B cell (primary cell): ENCODE measurements at regions of chr6 and their contacts with region 1.

Region 1: GRCh38 chr6:108113557-108114519 is 39.3 kb upstream of the OSTM1 start:
- DNase-seq: peak; percentile 72
- ATAC-seq: no peak
- H3K4me3 ChIP-seq: peak overlapping the region in 2 of 5 experiments; percentile 15 to 31
- H3K4me3 Mint-ChIP-seq: peak overlapping the region; percentile 85
- H3K27ac ChIP-seq: no peak overlapping the region
- H3K27ac Mint-ChIP-seq: no peak overlapping the region
- H3K4me1 ChIP-seq: peaks cover 45 to 51% of the 10 kb centered on the region in 2 donors
- H3K4me1 Mint-ChIP-seq: peaks cover 44% of the 10 kb centered on the region
- H3K27me3 ChIP-seq: peaks cover 0 to 72% (median 63%) of the 10 kb centered on the region in 4 experiments
- H3K27me3 Mint-ChIP-seq: peaks cover 71% of the 10 kb centered on the region
- CTCF ChIP-seq: peak; percentile 74

Region 2: GRCh38 chr6:108133594-108134179 is 19.8 kb after region 1 on chr6:
- CTCF ChIA-PET with region 1: interaction called, 4 read pairs
- POLR2A ChIA-PET with region 1: interaction called, 3 read pairs
- intact Hi-C with region 1: loop called (anchors 2 kb)
- DNase-seq: peak; percentile 60
- ATAC-seq: peak; percentile 74
- H3K4me3 ChIP-seq: peak overlapping the region; percentile 7 to 64 (median 44)
- H3K4me3 Mint-ChIP-seq: peak overlapping the region; percentile 88
- H3K27ac ChIP-seq: no peak overlapping the region
- H3K27ac Mint-ChIP-seq: no peak overlapping the region
- H3K4me1 ChIP-seq: peaks cover 21 to 22% of the 10 kb centered on the region in 2 donors
- H3K4me1 Mint-ChIP-seq: peaks cover 16% of the 10 kb centered on the region
- H3K27me3 ChIP-seq: peaks cover 0 to 61% (median 46%) of the 10 kb centered on the region in 4 experiments
- H3K27me3 Mint-ChIP-seq: peaks cover 73% of the 10 kb centered on the region
- CTCF ChIP-seq: no peak

Region 3: GRCh38 chr6:108168501-108169463 is 54.9 kb after region 1 on chr6:
- CTCF ChIA-PET with region 1: interaction called, 9 read pairs
- POLR2A ChIA-PET with region 1: no interaction called
- intact Hi-C with region 1: loop called (anchors 2 kb)
- DNase-seq: peak; percentile 75
- ATAC-seq: peak; percentile 65
- H3K4me3 ChIP-seq: peak overlapping the region in 4 of 5 experiments; percentile 22 to 59 (median 40)
- H3K4me3 Mint-ChIP-seq: peak overlapping the region; percentile 79
- H3K27ac ChIP-seq: no peak overlapping the region
- H3K27ac Mint-ChIP-seq: no peak overlapping the region
- H3K4me1 ChIP-seq: peaks cover 70 to 80% of the 10 kb centered on the region in 2 donors
- H3K4me1 Mint-ChIP-seq: peaks cover 54% of the 10 kb centered on the region
- H3K27me3 ChIP-seq: peaks cover 3 to 95% (median 84%) of the 10 kb centered on the region in 4 experiments
- H3K27me3 Mint-ChIP-seq: peaks cover 70% of the 10 kb centered on the region
- CTCF ChIP-seq: peak; percentile 23

Region 4: GRCh38 chr6:108492131-108492766 is 378.4 kb after region 1 on chr6:
- CTCF ChIA-PET with region 1: interaction called, 135 read pairs
- POLR2A ChIA-PET with region 1: interaction called, 3 read pairs
- intact Hi-C with region 1: no loop called
- DNase-seq: peak; percentile 65
- ATAC-seq: peak; percentile 54
- H3K4me3 ChIP-seq: no peak overlapping the region
- H3K4me3 Mint-ChIP-seq: no peak overlapping the region
- H3K27ac ChIP-seq: no peak overlapping the region
- H3K27ac Mint-ChIP-seq: no peak overlapping the region
- H3K4me1 ChIP-seq: no peaks in the 10 kb centered on the region
- H3K4me1 Mint-ChIP-seq: no peaks in the 10 kb centered on the region
- H3K27me3 ChIP-seq: no peaks in the 10 kb centered on the region
- H3K27me3 Mint-ChIP-seq: no peaks in the 10 kb centered on the region
- CTCF ChIP-seq: peak; percentile 78